ENCODE measurements at regions of chr1 and their contacts with region 1.

Region 1: GRCh38 chr1:27332536-27333281 is 9.1 kb upstream of the SYTL1 start:
- DNase-seq: peak; percentile 76 to 85 (median 80)
- ATAC-seq: peak; percentile 95
- H3K4me3 ChIP-seq: no peak overlapping the region
- H3K27ac ChIP-seq: no peak overlapping the region; the same call in 2 of the 3 replicates
- H3K4me1 ChIP-seq: peaks cover 0 to 12% of the 10 kb centered on the region in 2 experiments; a peak in 2 of 5 replicates
- H3K27me3 ChIP-seq: no peaks in the 10 kb centered on the region
- CTCF ChIP-seq: peak; percentile 88 to 96 (median 90)
- EP300 ChIP-seq: no peak
- POLR2A ChIP-seq: no peak
- RAD21 ChIP-seq: peak; percentile 26 to 75; a peak in 3 of 4 replicates

Region 2: DNA sequence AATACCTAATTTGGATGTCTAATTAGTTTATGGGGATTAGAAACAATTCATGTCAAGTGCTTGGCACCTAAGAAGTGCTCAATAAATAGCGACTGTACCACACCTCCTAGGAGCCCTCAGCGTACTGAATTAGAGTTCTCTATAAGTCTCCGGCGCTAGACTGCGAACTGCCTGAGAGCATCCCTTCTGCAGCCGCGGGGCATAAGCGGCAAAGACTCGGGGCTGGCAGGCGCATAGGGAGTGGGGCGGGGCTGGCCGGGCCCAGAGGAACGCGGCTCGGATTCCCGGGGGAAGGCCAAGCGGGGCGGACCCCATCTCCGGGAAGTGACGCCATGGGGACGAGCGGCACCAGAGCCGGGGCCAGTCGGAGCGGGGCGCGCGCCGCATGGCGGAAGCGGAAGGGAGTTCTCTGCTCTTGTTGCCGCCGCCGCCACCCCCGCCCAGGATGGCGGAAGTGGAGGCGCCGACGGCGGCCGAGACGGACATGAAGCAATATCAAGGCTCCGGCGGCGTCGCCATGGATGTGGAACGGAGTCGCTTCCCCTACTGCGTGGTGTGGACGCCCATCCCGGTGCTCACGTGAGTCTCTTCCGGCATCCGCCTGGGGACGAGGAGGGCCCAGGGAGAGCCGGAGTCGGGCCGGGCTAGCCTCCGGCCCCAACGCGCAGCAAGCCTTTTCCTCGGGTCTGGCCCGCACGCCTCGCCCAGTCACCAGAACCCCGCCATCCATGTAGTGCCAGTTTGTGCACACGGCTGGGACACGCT is 10.7 kb before region 1 on chr1 and contains the start of gene TMEM222:
- CTCF ChIA-PET with region 1: no interaction called
- POLR2A ChIA-PET with region 1: interaction called, 23 read pairs
- in situ Hi-C with region 1: no loop called
- intact Hi-C with region 1: no loop called
- DNase-seq: peak; percentile 98 to 99 (median 98)
- ATAC-seq: peak; percentile 98
- H3K4me3 ChIP-seq: peak within 1 kb of the TSS; percentile 79
- H3K27ac ChIP-seq: peak within 1 kb of the TSS; percentile 93
- H3K4me1 ChIP-seq: peaks cover 12 to 13% of the 10 kb centered on the region in 2 experiments
- H3K27me3 ChIP-seq: no peaks in the 10 kb centered on the region
- CTCF ChIP-seq: peak in 1 of 3 experiments; percentile 35; a peak in 2 of 6 replicates
- EP300 ChIP-seq: no peak; the same call in 1 of the 2 replicates
- POLR2A ChIP-seq: peak; percentile 92
- RAD21 ChIP-seq: peak in 1 of 2 experiments; percentile 19; a peak in 1 of 4 replicates
- polyA plus RNA-seq, gene TMEM222: 6.9 to 14.4 TPM

Region 3: GRCh38 chr1:27349784-27350662 is 17.3 kb after region 1 on chr1:
- CTCF ChIA-PET with region 1: no interaction called
- POLR2A ChIA-PET with region 1: interaction called, 13 read pairs
- in situ Hi-C with region 1: no loop called
- intact Hi-C with region 1: no loop called
- DNase-seq: no peak
- ATAC-seq: peak; percentile 10
- H3K4me3 ChIP-seq: no peak overlapping the region
- H3K27ac ChIP-seq: no peak overlapping the region
- H3K4me1 ChIP-seq: peaks cover 15 to 52% of the 10 kb centered on the region in 2 experiments; a peak in 4 of 5 replicates
- H3K27me3 ChIP-seq: no peaks in the 10 kb centered on the region
- CTCF ChIP-seq: no peak
- EP300 ChIP-seq: no peak
- POLR2A ChIP-seq: no peak
- RAD21 ChIP-seq: no peak

Region 4: DNA sequence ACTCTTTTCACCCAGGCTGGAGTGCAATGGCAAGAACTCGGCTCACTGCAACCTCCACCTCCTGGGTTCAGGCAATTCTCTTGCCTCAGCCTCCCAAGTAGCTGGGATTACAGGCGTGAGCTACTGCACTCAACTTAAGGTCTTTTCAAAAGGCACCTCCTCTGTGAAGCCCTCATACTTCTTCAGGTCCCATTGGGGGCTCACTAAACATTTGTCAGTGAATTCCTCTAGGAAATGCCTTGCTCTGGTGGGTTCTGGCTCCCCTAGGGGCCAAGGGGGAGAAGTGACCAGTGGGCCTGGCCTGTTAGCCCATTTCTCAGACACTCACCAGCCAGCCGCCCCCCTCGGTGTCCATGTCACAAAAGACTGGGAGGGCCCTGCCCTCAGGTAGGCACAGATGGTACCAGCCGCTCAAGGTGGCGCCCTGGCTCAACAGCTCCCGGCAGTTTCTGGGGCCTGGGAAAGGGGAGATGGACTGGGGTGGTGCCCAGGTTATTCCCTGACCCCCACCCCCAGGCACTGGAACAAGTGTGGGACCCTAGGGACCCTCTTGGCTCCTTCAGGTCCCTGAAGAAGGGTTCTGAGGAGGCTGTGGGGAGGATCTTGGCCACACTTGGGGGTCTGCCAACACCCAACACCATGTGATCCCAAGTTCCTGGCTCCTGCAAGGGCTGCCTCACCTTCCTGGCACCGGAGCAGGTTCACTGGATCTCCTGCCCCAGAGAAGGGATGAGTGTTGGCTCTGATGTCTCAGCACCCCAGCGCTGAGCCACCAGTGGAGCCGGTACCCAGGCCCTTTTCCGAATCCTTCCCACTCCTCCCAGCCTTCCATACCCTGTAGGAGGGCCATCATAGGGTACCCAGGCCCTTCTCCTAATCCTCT is 40.3 kb after region 1 on chr1:
- CTCF ChIA-PET with region 1: interaction called, 7 read pairs
- POLR2A ChIA-PET with region 1: interaction called, 3 read pairs
- in situ Hi-C with region 1: no loop called
- intact Hi-C with region 1: loop called (anchors 1 kb)
- DNase-seq: peak; percentile 71 to 78 (median 72)
- ATAC-seq: peak; percentile 87
- H3K4me3 ChIP-seq: no peak overlapping the region
- H3K27ac ChIP-seq: no peak overlapping the region
- H3K4me1 ChIP-seq: peaks cover 7 to 26% of the 10 kb centered on the region in 2 experiments; a peak in 4 of 5 replicates
- H3K27me3 ChIP-seq: no peaks in the 10 kb centered on the region
- CTCF ChIP-seq: peak; percentile 60 to 81 (median 77)
- EP300 ChIP-seq: no peak
- POLR2A ChIP-seq: no peak
- RAD21 ChIP-seq: no peak

Region 5: GRCh38 chr1:27489910-27490741 is 157.4 kb after region 1 on chr1 and contains the start of gene WASF2:
- CTCF ChIA-PET with region 1: no interaction called
- POLR2A ChIA-PET with region 1: no interaction called
- in situ Hi-C with region 1: no loop called
- intact Hi-C with region 1: no loop called
- DNase-seq: peak; percentile 93 to 99 (median 98)
- ATAC-seq: peak; percentile 96
- H3K4me3 ChIP-seq: peak within 1 kb of the TSS; percentile 79
- H3K27ac ChIP-seq: peak within 1 kb of the TSS; percentile 99
- H3K4me1 ChIP-seq: peaks cover 8 to 25% of the 10 kb centered on the region in 2 experiments; a peak in 4 of 5 replicates
- H3K27me3 ChIP-seq: no peaks in the 10 kb centered on the region
- CTCF ChIP-seq: no peak; a peak in 1 of 6 replicates
- EP300 ChIP-seq: peak; percentile 5
- POLR2A ChIP-seq: peak; percentile 92
- RAD21 ChIP-seq: 0 out of 4 replicates have a peak, but pooled peaks of 1 of the 2 experiments have one; percentile 13
- polyA plus RNA-seq, gene WASF2: 8.2 to 9.7 TPM